ENCODE measurements at regions of chr1 and their contacts with region 1.

Region 1: DNA sequence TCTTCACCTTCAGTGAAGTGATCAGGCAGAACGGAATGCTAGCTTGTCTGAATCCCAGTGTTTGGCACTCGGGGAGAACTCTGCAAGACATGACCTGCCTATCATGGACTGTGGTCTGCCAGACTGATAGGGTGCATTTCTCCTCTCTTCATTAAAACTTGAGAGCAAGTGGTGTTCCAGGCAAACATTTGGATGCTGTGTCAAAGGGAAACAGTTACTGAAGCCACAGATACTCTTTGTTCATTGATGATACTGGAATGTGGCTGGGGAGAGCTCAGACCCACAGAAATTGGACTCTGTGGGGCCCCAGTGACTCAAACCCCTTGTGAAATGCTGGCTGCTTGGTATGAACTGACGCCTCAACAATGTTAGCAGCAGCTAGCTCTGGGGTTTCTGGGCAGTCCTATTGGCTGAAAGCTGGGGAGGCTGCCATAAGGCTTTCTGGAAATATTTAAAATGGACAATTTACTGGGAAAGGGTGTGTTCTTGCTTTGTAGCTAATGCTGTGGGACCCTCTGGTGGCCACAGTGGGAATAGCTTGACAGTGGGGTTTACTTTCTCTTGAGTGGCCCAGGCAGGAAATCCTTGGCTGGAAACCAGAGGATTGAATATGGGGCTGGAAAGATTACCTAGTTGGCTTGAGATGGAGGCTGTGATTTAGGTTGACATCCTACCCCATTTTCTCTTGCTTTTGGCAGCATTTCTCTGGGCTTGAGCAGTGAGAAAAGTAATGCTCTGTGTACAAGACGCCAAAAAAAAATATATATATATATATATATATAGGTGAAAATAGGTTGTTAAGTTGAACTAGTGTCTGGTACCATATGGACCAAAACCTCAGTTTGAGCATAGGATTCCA is 8.0 kb upstream of the S100A10 start:
- DNase-seq: peak; percentile 81

Region 2: DNA sequence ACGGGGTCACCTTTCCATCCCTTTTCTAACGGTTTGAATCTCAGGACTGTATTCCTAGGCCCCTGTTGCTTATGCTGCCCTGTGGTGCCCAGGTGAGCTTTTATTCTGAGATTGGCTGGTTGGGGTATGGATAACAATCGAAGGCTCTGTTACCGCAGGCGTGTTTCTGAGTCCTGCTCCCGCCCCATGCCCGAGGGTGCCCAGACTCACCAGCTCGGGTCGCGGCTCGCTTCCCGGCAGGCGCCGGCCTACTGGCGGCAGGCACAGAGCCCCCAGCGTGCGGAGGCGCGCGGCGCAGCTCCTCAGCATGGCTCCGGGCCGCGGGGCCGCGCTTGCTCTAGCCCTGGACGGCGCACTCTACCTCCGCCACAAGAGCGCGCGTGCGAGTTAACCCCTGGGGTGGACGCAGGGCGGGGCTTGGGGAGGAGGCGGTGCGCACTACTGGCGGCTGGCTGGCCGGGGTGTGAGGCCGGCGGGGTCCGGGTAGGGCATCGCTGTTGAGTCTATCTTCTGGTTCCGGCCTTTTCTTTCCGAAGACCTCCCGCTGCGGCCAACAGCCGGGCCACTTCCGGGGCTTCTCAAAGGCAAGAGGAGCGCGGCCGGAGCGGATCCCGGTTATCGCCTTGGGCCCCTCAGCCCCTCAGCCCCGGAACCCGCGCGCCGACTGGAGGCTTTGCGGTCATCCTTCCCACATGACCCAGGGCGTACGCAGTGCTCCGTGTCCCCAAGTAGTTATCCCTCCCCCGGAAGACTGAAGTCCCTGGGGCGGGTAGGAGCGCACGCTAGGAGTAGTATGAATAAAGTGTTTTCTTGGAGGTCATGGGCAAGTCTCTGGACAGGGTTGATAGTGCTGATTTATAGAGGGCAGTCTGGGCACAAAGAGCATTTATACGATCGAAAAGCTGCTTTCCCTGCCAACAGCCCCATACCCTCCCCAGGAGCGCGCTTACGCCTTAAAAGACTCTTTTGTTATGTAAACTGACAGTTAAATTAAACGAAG is 92.2 kb before region 1 on chr1 and contains the start of gene THEM4:
- CTCF ChIA-PET with region 1: interaction called, 11 read pairs
- POLR2A ChIA-PET with region 1: interaction called, 6 read pairs
- DNase-seq: peak; percentile 99

Region 3: GRCh38 chr1:151934048-151934493 is 67.5 kb before region 1 on chr1:
- CTCF ChIA-PET with region 1: interaction called, 42 read pairs
- POLR2A ChIA-PET with region 1: interaction called, 4 read pairs
- DNase-seq: peak; percentile 74

Region 4: DNA sequence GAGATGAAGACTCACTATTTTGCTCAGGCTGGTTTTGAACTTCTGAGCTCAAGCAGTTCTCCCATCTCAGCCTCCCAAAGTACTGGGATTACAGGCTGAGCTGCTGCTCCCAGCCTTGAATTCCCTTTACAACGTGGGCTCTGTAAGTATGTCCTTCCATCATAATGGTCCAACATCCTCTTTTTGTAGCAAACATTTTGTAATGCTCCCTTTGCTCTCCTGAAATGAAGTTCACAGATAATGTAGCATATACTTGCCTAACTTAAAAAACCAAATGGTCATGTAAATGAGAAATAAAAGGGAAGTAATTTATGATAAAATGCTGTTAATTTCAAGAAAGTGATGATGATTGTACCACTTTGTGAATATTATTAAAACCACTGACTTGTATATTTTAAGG is 61.8 kb before region 1 on chr1:
- CTCF ChIA-PET with region 1: interaction called, 42 read pairs
- POLR2A ChIA-PET with region 1: interaction called, 4 read pairs
- DNase-seq: no peak

Region 5: DNA sequence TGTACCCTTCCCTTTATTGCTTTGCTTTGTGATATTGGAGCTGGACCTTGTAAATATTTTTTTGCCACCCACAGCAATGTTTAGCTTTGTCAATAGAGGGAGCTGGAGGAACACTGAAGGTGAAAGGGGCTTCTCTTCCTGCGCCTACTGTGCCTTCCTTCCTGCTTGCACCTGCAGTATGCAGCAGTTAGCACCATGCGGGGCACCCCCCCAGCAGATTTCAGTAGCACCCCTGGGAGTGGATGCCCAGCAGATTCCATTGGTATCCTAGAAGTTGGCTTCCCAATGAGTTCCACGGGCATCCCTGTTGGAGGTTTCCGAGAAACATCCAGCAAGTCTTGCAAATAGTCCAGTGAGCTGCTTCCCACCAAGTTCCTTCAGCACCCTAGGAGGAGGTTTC is 33.6 kb before region 1 on chr1:
- CTCF ChIA-PET with region 1: interaction called, 98 read pairs
- POLR2A ChIA-PET with region 1: no interaction called
- DNase-seq: peak; percentile 67

Region 6: DNA sequence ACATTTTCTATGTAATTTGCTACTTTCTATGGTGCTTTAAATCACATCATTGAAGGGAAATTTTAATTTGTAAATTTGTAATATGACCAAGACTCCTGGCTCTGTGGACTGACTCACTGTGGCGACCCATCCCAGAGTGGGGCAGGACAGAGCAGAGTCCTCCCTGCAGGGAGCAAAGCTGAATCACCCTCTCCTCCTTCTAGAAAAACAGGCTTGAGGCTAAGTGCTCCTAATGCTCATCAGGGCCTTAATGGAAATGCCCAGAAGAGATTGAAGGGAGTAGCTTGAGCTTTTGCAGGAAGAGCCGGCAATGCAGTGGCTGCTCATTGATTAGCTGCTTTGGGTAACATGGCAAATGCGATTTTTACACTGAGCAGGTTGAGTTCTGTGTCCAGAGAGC is 24.8 kb before region 1 on chr1:
- CTCF ChIA-PET with region 1: interaction called, 98 read pairs
- POLR2A ChIA-PET with region 1: no interaction called
- DNase-seq: no peak

Region 7: DNA sequence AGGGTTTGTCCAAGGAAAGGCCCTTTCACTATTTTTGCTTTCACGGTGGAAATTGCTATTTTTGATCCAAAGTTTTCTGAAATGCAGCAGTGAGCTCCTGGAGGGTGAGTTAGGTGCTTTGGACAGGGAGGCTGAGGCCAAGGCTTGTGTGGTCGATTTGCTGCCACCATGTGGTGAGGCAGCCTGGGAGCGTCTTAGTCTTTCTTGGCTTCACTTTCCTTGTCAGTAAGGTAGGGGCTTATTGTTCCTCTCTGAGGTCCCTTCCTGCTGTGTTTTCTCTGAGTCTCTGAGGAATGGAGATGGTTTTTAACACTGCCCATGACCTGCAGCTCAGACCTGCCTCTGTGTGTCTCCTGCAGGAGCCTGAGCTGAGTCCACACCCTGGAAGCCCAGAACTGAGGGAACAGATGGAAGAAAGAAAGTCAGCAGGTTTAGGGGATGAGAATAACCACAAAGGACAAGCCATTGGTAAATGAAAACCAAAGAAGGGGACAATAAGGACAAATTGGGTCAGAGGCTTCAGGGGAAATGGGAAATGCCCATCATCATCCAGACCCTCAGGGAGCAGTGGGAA is 12.1 kb after region 1 on chr1:
- CTCF ChIA-PET with region 1: interaction called, 11 read pairs
- POLR2A ChIA-PET with region 1: no interaction called
- DNase-seq: peak; percentile 67

Measured in HEK293T (cell line).